ENCODE measurements at regions of chr14 and their contacts with region 1.

Region 1: DNA sequence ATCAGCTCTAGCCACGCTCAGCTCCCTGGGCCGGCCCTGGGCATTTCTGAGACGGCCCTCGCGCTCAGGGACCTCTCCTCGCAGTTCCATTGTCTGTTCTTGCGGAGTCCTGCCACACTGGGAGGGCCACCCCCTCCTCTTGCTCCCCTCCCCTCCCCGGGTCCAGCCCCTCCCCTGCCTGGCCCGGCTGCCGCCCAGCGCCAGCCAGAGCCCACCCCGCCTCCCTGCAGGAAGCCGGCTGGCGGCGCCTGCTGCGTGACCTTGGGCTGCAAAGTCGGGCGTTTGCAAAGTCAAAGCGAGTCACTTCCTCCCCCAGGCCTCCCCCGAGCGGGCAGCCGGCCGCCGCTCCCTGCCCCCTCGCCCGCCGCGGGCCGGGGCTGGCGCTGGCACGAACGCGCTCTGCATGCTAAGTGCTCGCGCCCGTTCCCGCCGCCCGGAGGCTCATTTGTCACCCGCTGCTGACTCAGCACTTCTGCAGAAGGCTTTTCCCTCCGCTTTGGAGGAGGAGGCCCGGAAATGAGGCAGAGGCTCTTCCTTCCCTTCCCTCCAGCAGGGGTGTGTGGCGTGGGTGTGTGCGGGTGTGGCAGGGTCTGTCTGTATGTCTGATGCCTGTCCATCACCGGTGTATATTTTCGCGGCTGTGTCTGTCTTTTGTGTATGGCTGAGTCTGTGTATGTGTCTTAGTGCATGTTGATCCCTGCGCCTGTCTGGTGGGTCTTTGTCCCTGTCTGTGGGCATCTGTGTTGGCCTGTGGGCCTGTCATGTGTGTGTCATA is 72.0 kb downstream of the IRF2BPL start:
- DNase-seq: peak; percentile 99
- H3K4me3 ChIP-seq: no peak overlapping the region
- H3K27ac ChIP-seq: peak overlapping the region; percentile 95
- H3K4me1 ChIP-seq: peaks cover 73% of the 10 kb centered on the region
- H3K27me3 ChIP-seq: no peaks in the 10 kb centered on the region
- CTCF ChIP-seq: no peak
- POLR2A ChIP-seq: peak; percentile 15

Region 2: GRCh38 chr14:76647697-76648298 is 308.7 kb before region 1 on chr14:
- CTCF ChIA-PET with region 1: no interaction called
- POLR2A ChIA-PET with region 1: no interaction called
- dilution Hi-C with region 1: no loop called
- intact Hi-C with region 1: no loop called
- DNase-seq: peak; percentile 47
- H3K4me3 ChIP-seq: no peak overlapping the region
- H3K27ac ChIP-seq: no peak overlapping the region
- H3K4me1 ChIP-seq: no peaks in the 10 kb centered on the region
- H3K27me3 ChIP-seq: peaks cover 0 to 2% of the 10 kb centered on the region in 2 experiments
- CTCF ChIP-seq: peak; percentile 81 to 87
- POLR2A ChIP-seq: no peak

Region 3: GRCh38 chr14:76761136-76761959 is 195.2 kb before region 1 on chr14 and contains the start of gene VASH1:
- CTCF ChIA-PET with region 1: no interaction called
- POLR2A ChIA-PET with region 1: no interaction called
- dilution Hi-C with region 1: no loop called
- intact Hi-C with region 1: loop called (anchors 5 kb)
- DNase-seq: peak; percentile 75
- H3K4me3 ChIP-seq: peak within 1 kb of the TSS; percentile 81 to 98 (median 90)
- H3K27ac ChIP-seq: peak within 1 kb of the TSS; percentile 8
- H3K4me1 ChIP-seq: peaks cover 30% of the 10 kb centered on the region
- H3K27me3 ChIP-seq: peaks cover 2 to 6% of the 10 kb centered on the region in 2 experiments
- CTCF ChIP-seq: no peak
- POLR2A ChIP-seq: peak; percentile 82
- total RNA-seq, gene VASH1: 168 and 246 TPM in 2 replicates

Region 4: GRCh38 chr14:77028384-77029231 is 72.1 kb after region 1 on chr14 and contains the start of gene IRF2BPL:
- CTCF ChIA-PET with region 1: interaction called, 18 read pairs
- POLR2A ChIA-PET with region 1: interaction called, 6 read pairs
- dilution Hi-C with region 1: no loop called
- intact Hi-C with region 1: loop called (anchors 1 kb)
- DNase-seq: peak; percentile 99
- H3K4me3 ChIP-seq: peak within 1 kb of the TSS; percentile 24 to 90 (median 54)
- H3K27ac ChIP-seq: peak within 1 kb of the TSS; percentile 93
- H3K4me1 ChIP-seq: peaks cover 48% of the 10 kb centered on the region
- H3K27me3 ChIP-seq: no peaks in the 10 kb centered on the region
- CTCF ChIP-seq: no peak
- POLR2A ChIP-seq: peak; percentile 96
- total RNA-seq, gene IRF2BPL: 23.1 and 23.3 TPM in 2 replicates

Region 5: DNA sequence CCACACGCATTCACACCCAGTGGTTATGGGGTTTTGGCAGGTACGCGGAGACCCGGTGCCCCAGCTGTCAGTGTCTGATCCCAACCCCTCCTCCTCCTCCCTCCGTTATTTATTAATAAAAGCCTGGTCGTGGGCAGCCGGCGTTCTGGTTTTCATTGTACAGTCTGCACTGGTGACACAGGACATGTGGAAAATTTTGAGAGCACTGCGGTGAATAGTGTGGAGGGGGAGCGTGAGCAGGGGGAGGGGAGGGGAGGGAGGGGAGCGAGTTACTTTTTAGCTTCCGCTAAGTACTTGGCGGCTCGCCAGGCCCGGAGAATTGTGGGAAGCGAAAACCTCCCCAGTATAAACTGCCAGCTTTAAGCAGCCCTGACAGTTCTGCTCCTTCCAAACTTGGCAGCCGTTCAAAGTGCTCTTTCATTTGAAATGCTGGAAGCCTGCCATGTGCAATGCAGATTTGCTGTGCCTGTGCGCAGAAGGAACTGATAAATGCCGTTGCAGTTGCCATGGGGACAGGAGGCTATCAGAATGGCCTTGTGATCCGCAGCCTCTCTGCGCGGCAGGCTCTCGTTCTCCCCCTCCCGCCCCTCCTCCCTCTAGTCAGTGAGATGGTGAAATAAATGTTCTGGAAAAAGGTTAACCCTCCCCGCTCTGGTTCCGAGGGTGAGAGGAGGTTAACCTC is 83.7 kb after region 1 on chr14:
- CTCF ChIA-PET with region 1: interaction called, 5 read pairs
- POLR2A ChIA-PET with region 1: interaction called, 5 read pairs
- dilution Hi-C with region 1: no loop called
- intact Hi-C with region 1: loop called (anchors 1 kb)
- DNase-seq: peak; percentile 99
- H3K4me3 ChIP-seq: peak overlapping the region in 1 of 3 experiments; percentile 29
- H3K27ac ChIP-seq: peak overlapping the region; percentile 93
- H3K4me1 ChIP-seq: peaks cover 68% of the 10 kb centered on the region
- H3K27me3 ChIP-seq: no peaks in the 10 kb centered on the region
- CTCF ChIP-seq: no peak
- POLR2A ChIP-seq: no peak

Region 6: GRCh38 chr14:77097700-77098528 is 141.4 kb after region 1 on chr14 and contains the start of gene CIPC:
- CTCF ChIA-PET with region 1: no interaction called
- POLR2A ChIA-PET with region 1: no interaction called
- dilution Hi-C with region 1: no loop called
- intact Hi-C with region 1: loop called (anchors 1 kb)
- DNase-seq: peak; percentile 99
- H3K4me3 ChIP-seq: peak within 1 kb of the TSS; percentile 30 to 72 (median 66)
- H3K27ac ChIP-seq: peak within 1 kb of the TSS; percentile 57
- H3K4me1 ChIP-seq: peaks cover 27% of the 10 kb centered on the region
- H3K27me3 ChIP-seq: no peaks in the 10 kb centered on the region
- CTCF ChIP-seq: no peak
- POLR2A ChIP-seq: no peak
- total RNA-seq, gene CIPC: 17.4 and 17.7 TPM in 2 replicates